Psoas muscle (tissue), 8 donors: ENCODE measurements at regions of chr17 and their contacts with region 1.

Region 1: DNA sequence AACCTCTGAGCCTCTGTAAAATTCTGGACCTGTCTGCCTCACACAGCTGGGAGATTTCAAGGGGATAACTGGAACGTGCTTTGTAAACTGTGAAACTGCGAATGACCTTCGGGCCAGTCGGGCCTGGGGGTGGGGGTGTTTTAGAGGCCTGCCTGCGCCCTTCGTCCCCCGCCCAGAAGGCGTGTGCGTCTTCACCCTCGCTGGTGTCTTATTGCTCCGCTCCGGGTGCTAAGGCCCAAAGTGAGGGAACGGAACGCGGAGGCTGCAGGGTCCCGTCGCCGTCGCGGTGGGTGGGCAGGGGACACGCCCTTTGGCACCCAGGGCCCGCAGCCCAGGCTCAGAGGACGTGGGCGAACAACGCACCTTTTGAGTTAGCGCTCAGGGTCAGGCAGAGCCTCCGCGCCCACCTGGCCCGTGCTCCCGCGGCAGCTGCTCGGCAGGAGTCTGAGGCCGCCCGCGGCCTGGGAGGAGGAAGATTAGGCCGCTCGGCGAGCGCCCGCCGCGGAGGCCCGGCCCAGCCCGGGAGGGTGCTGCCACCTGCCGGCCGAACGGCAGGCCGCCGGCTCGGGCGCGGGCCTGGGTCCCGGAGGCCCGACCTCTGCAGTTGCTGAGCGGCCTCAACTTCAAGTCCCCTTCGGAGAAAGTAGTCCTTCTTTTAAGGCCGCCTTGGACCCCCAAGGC is 29.7 kb downstream of the DCAKD start:
- DNase-seq: peak; percentile 73 to 85
- ATAC-seq: peak; percentile 85 to 90 (median 87)
- H3K4me3 ChIP-seq: peak overlapping the region; percentile 67
- H3K27ac ChIP-seq: peak overlapping the region; percentile 68
- H3K4me1 ChIP-seq: peaks cover 15% of the 10 kb centered on the region
- H3K27me3 ChIP-seq: no peaks in the 10 kb centered on the region
- CTCF ChIP-seq: peak; percentile 99

Region 2: DNA sequence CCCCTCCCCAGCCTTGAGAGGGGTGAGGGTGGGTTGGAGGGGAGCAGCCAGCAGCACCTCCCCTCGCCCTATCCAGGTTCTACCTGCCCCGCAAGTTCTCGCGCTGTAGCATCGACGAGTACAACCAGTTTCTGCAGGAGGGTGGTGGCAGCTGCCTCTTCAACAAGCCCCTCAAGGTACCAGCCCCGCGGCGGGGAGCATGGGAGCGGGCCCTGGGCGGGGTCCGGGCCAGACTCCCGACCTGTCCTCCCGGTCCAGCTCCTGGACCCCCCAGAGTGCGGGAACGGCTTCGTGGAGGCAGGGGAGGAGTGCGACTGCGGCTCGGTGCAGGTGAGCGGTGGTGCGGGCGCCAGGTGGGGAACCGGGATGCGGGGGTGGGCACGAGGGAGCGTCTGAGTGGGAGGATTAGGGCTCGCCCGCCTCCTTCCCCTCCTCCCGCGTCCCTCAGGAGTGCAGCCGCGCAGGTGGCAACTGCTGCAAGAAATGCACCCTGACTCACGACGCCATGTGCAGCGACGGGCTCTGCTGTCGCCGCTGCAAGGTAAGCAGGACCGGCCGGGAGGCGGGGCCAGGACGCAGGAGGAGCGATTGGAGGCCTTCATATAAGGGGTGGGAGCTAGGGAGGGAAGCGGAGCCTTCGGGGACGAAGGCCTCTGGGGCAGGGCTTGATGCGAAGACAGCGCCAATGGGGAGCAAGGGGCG is 246.5 kb before region 1 on chr17:
- intact Hi-C with region 1: loop called (anchors 1 to 5 kb)
- DNase-seq: peak; percentile 93 to 96
- ATAC-seq: peak; percentile 93 to 96 (median 95)
- H3K4me3 ChIP-seq: peak overlapping the region; percentile 66
- H3K27ac ChIP-seq: no peak overlapping the region
- H3K4me1 ChIP-seq: peaks cover 14% of the 10 kb centered on the region
- H3K27me3 ChIP-seq: peaks cover 0 to 20% (median 0%) of the 10 kb centered on the region in 3 donors
- CTCF ChIP-seq: no peak

Region 3: DNA sequence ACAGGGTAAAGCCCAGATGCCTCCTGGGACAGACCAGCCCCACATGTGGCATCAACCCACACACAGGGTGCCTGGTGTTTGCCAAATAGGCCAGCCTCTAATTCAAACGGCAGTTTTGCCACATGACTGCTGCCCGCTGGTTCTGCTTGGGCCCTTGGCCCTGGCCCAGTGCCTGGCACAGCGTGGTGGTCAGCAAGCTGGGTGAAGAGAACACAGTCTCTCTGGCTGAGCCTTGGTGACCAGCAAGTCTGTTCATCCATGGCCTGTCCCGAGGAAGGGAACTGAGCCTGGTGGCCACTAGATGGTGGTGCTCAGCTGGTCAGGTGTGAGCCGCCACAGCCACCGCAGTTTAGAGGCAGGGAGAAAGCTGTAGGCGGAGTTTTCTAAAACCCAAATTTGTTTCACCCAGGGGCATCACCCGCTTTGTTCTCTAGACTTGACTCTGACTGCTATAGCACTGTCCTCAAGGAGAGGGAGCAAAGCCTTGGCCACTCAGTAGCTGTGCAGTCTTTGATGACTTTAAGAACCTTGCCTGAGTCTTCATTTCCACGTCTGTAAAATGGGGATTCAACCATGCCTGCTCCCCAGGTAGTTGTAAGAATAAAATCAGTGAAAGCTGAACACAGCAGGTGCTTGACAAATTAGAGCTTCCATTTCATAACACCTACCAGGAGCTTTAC is 101.7 kb before region 1 on chr17:
- intact Hi-C with region 1: loop called (anchors 1 to 2 kb)
- DNase-seq: peak; percentile 79 to 86
- ATAC-seq: peak; percentile 92 to 98 (median 96)
- H3K4me3 ChIP-seq: no peak overlapping the region
- H3K27ac ChIP-seq: no peak overlapping the region
- H3K4me1 ChIP-seq: no peaks in the 10 kb centered on the region
- H3K27me3 ChIP-seq: peaks cover 0 to 3% (median 0%) of the 10 kb centered on the region in 3 donors
- CTCF ChIP-seq: peak; percentile 83